ENCODE measurements at regions of chr19 and their contacts with region 1.

Region 1: GRCh38 chr19:52048555-52049501 is at the start of gene ZNF432:
- DNase-seq: peak; percentile 83 to 91 (median 84)
- H3K4me3 ChIP-seq: peak within 1 kb of the TSS; percentile 74 to 75
- H3K4me3 Mint-ChIP-seq: peak within 1 kb of the TSS; percentile 96 to 100 (median 99)
- H3K27ac ChIP-seq: peak within 1 kb of the TSS; percentile 96
- H3K27ac Mint-ChIP-seq: peak within 1 kb of the TSS; percentile 98 to 100 (median 100)
- H3K4me1 ChIP-seq: peaks cover 15% of the 10 kb centered on the region
- H3K4me1 Mint-ChIP-seq: peaks cover 17 to 32% (median 21%) of the 10 kb centered on the region in 4 donors
- H3K27me3 ChIP-seq: no peaks in the 10 kb centered on the region
- H3K27me3 Mint-ChIP-seq: no peaks in the 10 kb centered on the region
- total RNA-seq, gene ZNF432: 23.4 to 23.9 TPM

Region 2: GRCh38 chr19:50537762-50538230 is 1511.0 kb before region 1 on chr19:
- CTCF ChIA-PET with region 1: no interaction called
- POLR2A ChIA-PET with region 1: no interaction called
- intact Hi-C with region 1: no loop called
- DNase-seq: peak in 4 of 5 donors; percentile 26 to 35 (median 30)
- H3K4me3 ChIP-seq: no peak overlapping the region
- H3K4me3 Mint-ChIP-seq: no peak overlapping the region
- H3K27ac ChIP-seq: no peak overlapping the region
- H3K27ac Mint-ChIP-seq: no peak overlapping the region
- H3K4me1 ChIP-seq: no peaks in the 10 kb centered on the region
- H3K4me1 Mint-ChIP-seq: no peaks in the 10 kb centered on the region
- H3K27me3 ChIP-seq: no peaks in the 10 kb centered on the region
- H3K27me3 Mint-ChIP-seq: peaks cover 11 to 23% of the 10 kb centered on the region in 2 donors

Region 3: GRCh38 chr19:51986309-51987291 is 62.2 kb before region 1 on chr19 and contains the start of gene ZNF350:
- CTCF ChIA-PET with region 1: no interaction called
- POLR2A ChIA-PET with region 1: no interaction called
- intact Hi-C with region 1: loop called (anchors 1 kb)
- DNase-seq: peak; percentile 88 to 96 (median 89)
- H3K4me3 ChIP-seq: peak within 1 kb of the TSS; percentile 57 to 98
- H3K4me3 Mint-ChIP-seq: peak within 1 kb of the TSS; percentile 94 to 100 (median 98)
- H3K27ac ChIP-seq: peak within 1 kb of the TSS; percentile 74
- H3K27ac Mint-ChIP-seq: peak within 1 kb of the TSS; percentile 81 to 98 (median 94)
- H3K4me1 ChIP-seq: peaks cover 11% of the 10 kb centered on the region
- H3K4me1 Mint-ChIP-seq: peaks cover 9 to 32% (median 12%) of the 10 kb centered on the region in 4 donors
- H3K27me3 ChIP-seq: no peaks in the 10 kb centered on the region
- H3K27me3 Mint-ChIP-seq: no peaks in the 10 kb centered on the region
- total RNA-seq, gene ZNF350: 37.0 to 38.9 TPM

Region 4: DNA sequence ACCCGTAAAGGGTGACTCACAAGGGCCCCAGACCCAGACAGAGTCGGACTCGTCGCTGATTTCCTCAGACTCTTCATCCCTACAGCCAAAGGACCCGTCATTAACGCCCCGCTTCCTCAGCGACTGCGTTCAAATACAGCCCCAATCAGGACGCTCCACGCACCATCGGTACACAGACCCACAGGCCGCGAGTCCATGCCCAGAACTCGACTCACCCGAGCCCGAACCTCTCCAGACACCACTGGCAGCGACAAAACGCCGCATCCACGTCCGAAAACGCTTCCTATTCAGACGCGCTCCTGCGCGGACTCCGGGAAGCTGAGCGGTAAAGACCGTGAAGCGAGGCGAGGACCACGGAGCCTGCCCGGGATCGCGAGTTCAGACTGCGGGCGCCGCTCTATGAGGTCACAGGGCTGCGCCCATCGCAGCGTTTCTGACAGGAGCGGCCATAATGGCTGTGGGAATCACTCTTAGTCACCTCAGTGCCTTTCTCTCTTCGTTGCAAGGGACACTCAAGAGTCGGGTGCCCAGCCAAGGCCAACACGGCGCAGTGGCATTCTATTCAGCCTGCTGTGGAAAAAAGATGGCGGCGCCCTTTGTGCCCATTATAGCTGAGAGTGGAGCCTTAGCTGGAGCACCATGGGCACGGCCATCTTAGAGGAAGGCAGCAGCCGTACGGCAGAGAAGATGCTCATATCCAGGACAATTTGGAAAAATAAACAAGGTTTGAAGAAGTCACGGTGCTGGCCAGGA is 20.6 kb before region 1 on chr19 and contains the start of gene ZNF614:
- CTCF ChIA-PET with region 1: interaction called, 3 read pairs
- POLR2A ChIA-PET with region 1: interaction called, 39 read pairs
- intact Hi-C with region 1: loop called (anchors 1 kb)
- DNase-seq: peak; percentile 85 to 93 (median 89)
- H3K4me3 ChIP-seq: peak within 1 kb of the TSS; percentile 77 to 96
- H3K4me3 Mint-ChIP-seq: peak within 1 kb of the TSS; percentile 90 to 99 (median 94)
- H3K27ac ChIP-seq: peak within 1 kb of the TSS; percentile 89
- H3K27ac Mint-ChIP-seq: peak within 1 kb of the TSS; percentile 91 to 99 (median 96)
- H3K4me1 ChIP-seq: peaks cover 18% of the 10 kb centered on the region
- H3K4me1 Mint-ChIP-seq: peaks cover 16 to 33% (median 23%) of the 10 kb centered on the region in 4 donors
- H3K27me3 ChIP-seq: no peaks in the 10 kb centered on the region
- H3K27me3 Mint-ChIP-seq: no peaks in the 10 kb centered on the region
- total RNA-seq, gene ZNF614: 12.3 TPM

Region 5: GRCh38 chr19:52065399-52065798 is 16.6 kb after region 1 on chr19:
- CTCF ChIA-PET with region 1: no interaction called
- POLR2A ChIA-PET with region 1: no interaction called
- intact Hi-C with region 1: no loop called
- DNase-seq: no peak
- H3K4me3 ChIP-seq: peak overlapping the region in 1 of 2 donors; percentile 23
- H3K4me3 Mint-ChIP-seq: no peak overlapping the region
- H3K27ac ChIP-seq: no peak overlapping the region
- H3K27ac Mint-ChIP-seq: no peak overlapping the region
- H3K4me1 ChIP-seq: no peaks in the 10 kb centered on the region
- H3K4me1 Mint-ChIP-seq: no peaks in the 10 kb centered on the region
- H3K27me3 ChIP-seq: no peaks in the 10 kb centered on the region
- H3K27me3 Mint-ChIP-seq: no peaks in the 10 kb centered on the region

Region 6: GRCh38 chr19:52139252-52140031 is 90.6 kb after region 1 on chr19 and contains the start of gene ZNF616:
- CTCF ChIA-PET with region 1: no interaction called
- POLR2A ChIA-PET with region 1: interaction called, 8 read pairs
- intact Hi-C with region 1: loop called (anchors 2 kb)
- DNase-seq: peak; percentile 64 to 97 (median 96)
- H3K4me3 ChIP-seq: peak within 1 kb of the TSS; percentile 72 to 75
- H3K4me3 Mint-ChIP-seq: peak within 1 kb of the TSS; percentile 90 to 98 (median 96)
- H3K27ac ChIP-seq: peak within 1 kb of the TSS; percentile 75
- H3K27ac Mint-ChIP-seq: peak within 1 kb of the TSS; percentile 91 to 98 (median 94)
- H3K4me1 ChIP-seq: peaks cover 18% of the 10 kb centered on the region
- H3K4me1 Mint-ChIP-seq: peaks cover 23 to 38% (median 29%) of the 10 kb centered on the region in 4 donors
- H3K27me3 ChIP-seq: no peaks in the 10 kb centered on the region
- H3K27me3 Mint-ChIP-seq: no peaks in the 10 kb centered on the region
- total RNA-seq, gene ZNF616: 18.6 to 19.0 TPM

Region 7: GRCh38 chr19:52237771-52238400 is 189.1 kb after region 1 on chr19:
- CTCF ChIA-PET with region 1: no interaction called
- POLR2A ChIA-PET with region 1: no interaction called
- intact Hi-C with region 1: loop called (anchors 10 kb)
- DNase-seq: peak; percentile 47 to 55 (median 51)
- H3K4me3 ChIP-seq: no peak overlapping the region
- H3K4me3 Mint-ChIP-seq: no peak overlapping the region
- H3K27ac ChIP-seq: no peak overlapping the region
- H3K27ac Mint-ChIP-seq: peak overlapping the region in 2 of 7 donors; percentile 1 to 46
- H3K4me1 ChIP-seq: no peaks in the 10 kb centered on the region
- H3K4me1 Mint-ChIP-seq: peaks cover 0 to 3% (median 0%) of the 10 kb centered on the region in 4 donors
- H3K27me3 ChIP-seq: no peaks in the 10 kb centered on the region
- H3K27me3 Mint-ChIP-seq: no peaks in the 10 kb centered on the region